Endothelial cell of umbilical vein (primary cell): ENCODE measurements at regions of chr9 and their contacts with region 1.

Region 1: GRCh38 chr9:95793924-95794828 is 81.3 kb upstream of the ERCC6L2 start:
- DNase-seq: peak; percentile 97
- H3K4me3 ChIP-seq: no peak overlapping the region
- H3K27ac ChIP-seq: peak overlapping the region; percentile 92
- H3K4me1 ChIP-seq: peaks cover 22% of the 10 kb centered on the region
- H3K27me3 ChIP-seq: no peaks in the 10 kb centered on the region
- CTCF ChIP-seq: no peak
- POLR2A ChIP-seq: peak; percentile 54

Region 2: GRCh38 chr9:95189251-95190098 is 604.7 kb before region 1 on chr9:
- CTCF ChIA-PET with region 1: no interaction called
- POLR2A ChIA-PET with region 1: no interaction called
- dilution Hi-C with region 1: no loop called
- intact Hi-C with region 1: loop called (anchors 5 kb)
- DNase-seq: peak; percentile 95
- H3K4me3 ChIP-seq: peak overlapping the region in 2 of 3 experiments; percentile 24 to 41
- H3K27ac ChIP-seq: peak overlapping the region; percentile 89
- H3K4me1 ChIP-seq: peaks cover 25% of the 10 kb centered on the region
- H3K27me3 ChIP-seq: no peaks in the 10 kb centered on the region
- CTCF ChIP-seq: no peak
- POLR2A ChIP-seq: no peak

Region 3: GRCh38 chr9:95726756-95727155 is 67.4 kb before region 1 on chr9:
- CTCF ChIA-PET with region 1: no interaction called
- POLR2A ChIA-PET with region 1: no interaction called
- dilution Hi-C with region 1: no loop called
- intact Hi-C with region 1: no loop called
- DNase-seq: peak; percentile 57
- H3K4me3 ChIP-seq: no peak overlapping the region
- H3K27ac ChIP-seq: no peak overlapping the region
- H3K4me1 ChIP-seq: no peaks in the 10 kb centered on the region
- H3K27me3 ChIP-seq: no peaks in the 10 kb centered on the region
- CTCF ChIP-seq: peak; percentile 56 to 67
- POLR2A ChIP-seq: no peak

Region 4: DNA sequence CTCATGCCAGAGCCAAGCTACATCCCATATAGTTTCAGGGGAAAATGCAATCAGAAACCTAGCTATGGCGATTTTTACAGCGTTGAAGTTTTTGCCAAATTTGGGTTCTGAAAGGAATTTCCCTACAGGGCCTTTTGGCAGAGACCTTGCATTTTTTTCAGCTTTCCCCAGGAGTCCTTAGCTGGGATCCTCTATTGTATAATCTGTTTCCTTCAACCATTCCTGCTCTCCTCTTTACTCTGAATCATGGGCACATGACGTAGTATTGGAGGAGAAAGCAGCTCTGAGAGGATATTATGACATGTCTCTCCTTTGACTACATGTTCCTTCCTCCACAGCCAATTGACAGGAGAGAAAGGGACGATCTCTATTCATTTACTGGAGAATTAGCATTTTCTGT is 37.2 kb before region 1 on chr9:
- CTCF ChIA-PET with region 1: interaction called, 5 read pairs
- POLR2A ChIA-PET with region 1: no interaction called
- dilution Hi-C with region 1: no loop called
- intact Hi-C with region 1: loop called (anchors 2 kb)
- DNase-seq: peak; percentile 79
- H3K4me3 ChIP-seq: no peak overlapping the region
- H3K27ac ChIP-seq: no peak overlapping the region
- H3K4me1 ChIP-seq: peaks cover 5% of the 10 kb centered on the region
- H3K27me3 ChIP-seq: no peaks in the 10 kb centered on the region
- CTCF ChIP-seq: no peak
- POLR2A ChIP-seq: no peak

Region 5: DNA sequence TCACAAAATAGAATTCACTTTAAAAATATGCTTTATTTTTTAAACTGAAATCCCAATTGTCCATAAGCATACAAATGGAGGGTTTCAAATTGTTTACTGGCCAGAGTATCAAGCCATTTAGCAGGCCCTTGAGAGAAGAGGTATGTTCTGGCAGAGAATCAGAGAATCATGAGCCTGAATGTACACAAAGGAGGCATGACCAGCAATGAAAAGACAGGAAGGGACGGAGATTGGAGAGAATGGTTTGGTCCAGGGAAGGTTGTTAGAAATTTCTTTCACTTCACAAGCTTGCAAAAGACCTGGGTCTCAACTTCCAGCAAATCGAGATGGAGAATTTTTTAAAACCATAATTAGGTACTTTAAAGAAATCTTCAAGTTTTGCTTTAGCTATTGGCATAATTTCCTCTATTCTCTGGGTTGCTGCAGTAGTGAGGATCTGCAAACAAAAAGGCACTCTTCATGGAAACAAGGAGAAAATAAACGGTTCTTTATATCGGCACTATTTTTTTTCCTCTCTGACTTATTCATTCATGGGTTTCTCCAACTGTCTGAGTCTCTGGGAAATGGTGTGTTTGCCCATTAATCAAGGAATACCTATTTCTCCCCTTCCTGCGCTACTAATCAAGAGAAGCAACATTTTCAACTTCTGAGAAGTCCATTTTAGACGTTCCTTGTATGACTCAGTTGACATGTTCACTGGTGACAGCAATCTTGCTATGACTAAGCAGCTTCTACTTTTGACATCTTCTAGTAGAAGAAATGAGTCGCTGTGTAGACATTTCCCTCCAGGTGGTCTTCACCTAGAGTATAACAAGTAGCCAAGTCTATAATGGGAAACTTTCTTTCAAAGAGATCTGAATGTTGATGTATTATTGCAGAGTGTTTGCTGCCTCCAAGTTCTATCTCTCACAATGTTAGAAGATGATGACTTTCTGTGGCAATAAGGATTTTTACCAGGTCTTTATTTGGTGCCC is 58.2 kb after region 1 on chr9:
- CTCF ChIA-PET with region 1: no interaction called
- POLR2A ChIA-PET with region 1: no interaction called
- dilution Hi-C with region 1: no loop called
- intact Hi-C with region 1: loop called (anchors 1 kb)
- DNase-seq: peak; percentile 63
- H3K4me3 ChIP-seq: no peak overlapping the region
- H3K27ac ChIP-seq: peak overlapping the region; percentile 43
- H3K4me1 ChIP-seq: peaks cover 54% of the 10 kb centered on the region
- H3K27me3 ChIP-seq: no peaks in the 10 kb centered on the region
- CTCF ChIP-seq: no peak
- POLR2A ChIP-seq: no peak

Region 6: DNA sequence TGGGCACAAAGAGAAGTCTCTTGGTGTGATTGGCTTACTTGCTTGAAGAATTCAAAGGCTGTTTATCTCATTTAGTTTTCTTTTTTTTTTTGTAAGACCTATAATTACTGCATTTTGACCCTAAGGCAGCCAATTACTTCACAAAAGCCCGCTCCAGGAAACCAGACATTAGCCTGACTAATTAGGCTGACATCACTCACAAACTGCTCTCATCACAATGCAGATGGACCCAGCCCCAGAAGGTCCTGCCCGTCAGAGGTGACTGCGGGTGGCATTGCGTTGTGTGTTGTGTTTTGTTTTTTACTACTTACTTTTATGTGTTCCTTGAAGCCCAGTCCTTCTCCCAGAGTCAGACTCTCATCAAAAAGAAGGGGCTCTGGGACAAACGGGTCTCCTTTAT is 335.5 kb after region 1 on chr9:
- CTCF ChIA-PET with region 1: no interaction called
- POLR2A ChIA-PET with region 1: no interaction called
- dilution Hi-C with region 1: no loop called
- intact Hi-C with region 1: loop called (anchors 5 kb)
- DNase-seq: peak; percentile 86
- H3K4me3 ChIP-seq: peak overlapping the region in 1 of 3 experiments; percentile 35
- H3K27ac ChIP-seq: peak overlapping the region; percentile 77
- H3K4me1 ChIP-seq: peaks cover 33% of the 10 kb centered on the region
- H3K27me3 ChIP-seq: no peaks in the 10 kb centered on the region
- CTCF ChIP-seq: no peak
- POLR2A ChIP-seq: no peak

Region 7: DNA sequence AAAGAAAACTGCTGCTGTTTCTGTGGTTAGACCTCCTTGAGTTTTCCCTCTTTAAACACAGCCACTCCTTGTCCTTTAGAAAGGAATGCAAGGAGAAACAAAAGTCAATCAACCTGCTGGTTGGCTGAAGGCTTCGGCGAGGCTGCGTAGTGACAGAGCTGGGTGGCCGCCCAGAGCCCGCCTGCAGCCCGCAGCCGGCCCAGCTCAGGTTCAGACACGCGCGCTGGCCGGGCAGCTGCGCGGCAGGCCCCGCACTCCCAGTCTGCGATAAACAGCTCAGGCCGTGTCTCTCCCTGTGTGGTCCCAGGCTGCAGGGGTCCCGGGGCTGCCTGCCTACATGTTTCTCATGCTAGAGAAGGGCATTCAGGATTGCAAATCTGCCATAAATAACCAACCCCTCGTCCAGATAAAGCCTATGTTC is 392.4 kb after region 1 on chr9:
- CTCF ChIA-PET with region 1: no interaction called
- POLR2A ChIA-PET with region 1: no interaction called
- dilution Hi-C with region 1: no loop called
- intact Hi-C with region 1: no loop called
- DNase-seq: no peak
- H3K4me3 ChIP-seq: no peak overlapping the region
- H3K27ac ChIP-seq: no peak overlapping the region
- H3K4me1 ChIP-seq: no peaks in the 10 kb centered on the region
- H3K27me3 ChIP-seq: peaks cover 4 to 19% of the 10 kb centered on the region in 2 experiments
- CTCF ChIP-seq: no peak
- POLR2A ChIP-seq: no peak